ENCODE measurements at regions of chr11 and their contacts with region 1.

Region 1: GRCh38 chr11:3091791-3092602 is 34.8 kb upstream of the CARS1 start:
- DNase-seq: peak; percentile 82
- H3K4me3 Mint-ChIP-seq: no peak overlapping the region
- H3K27ac Mint-ChIP-seq: no peak overlapping the region
- H3K4me1 Mint-ChIP-seq: peaks cover 3% of the 10 kb centered on the region
- H3K27me3 Mint-ChIP-seq: peaks cover 14% of the 10 kb centered on the region

Region 2: DNA sequence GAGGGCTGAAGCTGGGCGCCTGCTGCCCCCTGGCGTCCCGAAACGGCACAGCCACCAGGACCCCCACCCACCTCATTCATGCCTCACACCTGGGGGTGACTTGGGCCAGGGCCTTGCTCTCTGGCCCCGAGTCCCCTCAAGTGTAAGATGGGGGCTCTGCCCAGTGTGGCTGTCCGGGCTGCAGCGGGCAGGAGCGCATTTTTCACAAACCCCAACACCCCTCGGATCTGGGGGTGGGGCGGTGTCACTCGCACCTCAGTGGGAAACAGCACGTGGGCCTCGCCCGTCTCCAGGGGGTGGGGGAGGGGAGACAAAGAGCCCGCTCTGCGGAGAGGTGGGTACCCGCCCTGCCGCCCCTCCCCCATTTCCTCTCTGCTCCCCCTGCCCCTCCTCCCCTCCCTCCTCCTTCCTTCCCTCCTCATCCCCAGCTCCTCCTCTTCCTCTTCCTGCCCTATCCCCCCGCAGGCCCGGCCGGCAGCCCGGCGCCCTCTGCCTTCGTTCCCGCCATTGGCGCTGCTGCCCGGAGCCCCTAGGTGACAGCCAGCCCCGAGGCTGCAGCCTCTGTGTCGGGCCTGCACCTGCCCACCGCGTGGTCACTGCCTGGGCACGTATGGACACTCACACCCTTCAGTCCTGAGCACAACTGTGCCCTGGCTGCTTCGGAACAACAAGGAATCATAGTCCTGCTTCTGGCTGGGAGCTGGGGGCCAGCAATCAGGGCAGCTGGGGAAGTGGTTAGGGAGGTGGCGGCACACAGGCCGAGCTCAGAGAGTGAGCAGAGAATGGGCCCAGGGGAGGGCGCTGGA is 199.6 kb before region 1 on chr11:
- CTCF ChIA-PET with region 1: interaction called, 11 read pairs
- DNase-seq: peak; percentile 90
- H3K4me3 Mint-ChIP-seq: peak overlapping the region; percentile 81
- H3K27ac Mint-ChIP-seq: peak overlapping the region; percentile 86
- H3K4me1 Mint-ChIP-seq: peaks cover 35% of the 10 kb centered on the region
- H3K27me3 Mint-ChIP-seq: peaks cover 19% of the 10 kb centered on the region

Region 3: DNA sequence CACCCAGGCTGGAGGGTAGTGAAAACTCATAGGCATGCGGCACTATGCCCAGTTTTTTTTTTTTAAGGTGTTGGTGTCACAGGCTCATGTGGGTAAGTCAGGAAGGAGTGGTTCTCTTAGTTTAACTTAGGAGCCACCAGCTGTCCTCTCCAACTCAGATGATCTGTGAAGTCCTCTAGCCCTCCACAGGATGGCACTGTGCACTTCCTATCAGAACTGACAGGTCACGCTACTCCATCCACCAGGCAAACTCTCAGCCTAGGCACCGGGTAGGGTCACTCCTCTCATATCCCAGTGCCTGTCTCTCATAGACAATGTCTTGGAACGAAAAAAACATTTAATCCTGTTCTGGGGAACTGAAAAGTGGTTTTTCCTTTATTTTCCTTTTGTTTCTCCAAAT is 116.4 kb before region 1 on chr11:
- CTCF ChIA-PET with region 1: interaction called, 28 read pairs
- DNase-seq: peak; percentile 65
- H3K4me3 Mint-ChIP-seq: no peak overlapping the region
- H3K27ac Mint-ChIP-seq: peak overlapping the region; percentile 37
- H3K4me1 Mint-ChIP-seq: peaks cover 27% of the 10 kb centered on the region
- H3K27me3 Mint-ChIP-seq: no peaks in the 10 kb centered on the region

Region 4: GRCh38 chr11:3021125-3021524 is 70.9 kb before region 1 on chr11:
- CTCF ChIA-PET with region 1: interaction called, 20 read pairs
- DNase-seq: peak; percentile 64
- H3K4me3 Mint-ChIP-seq: no peak overlapping the region
- H3K27ac Mint-ChIP-seq: no peak overlapping the region
- H3K4me1 Mint-ChIP-seq: peaks cover 68% of the 10 kb centered on the region
- H3K27me3 Mint-ChIP-seq: no peaks in the 10 kb centered on the region

Region 5: GRCh38 chr11:3069425-3069824 is 22.6 kb before region 1 on chr11:
- CTCF ChIA-PET with region 1: interaction called, 12 read pairs
- DNase-seq: no peak
- H3K4me3 Mint-ChIP-seq: no peak overlapping the region
- H3K27ac Mint-ChIP-seq: no peak overlapping the region
- H3K4me1 Mint-ChIP-seq: no peaks in the 10 kb centered on the region
- H3K27me3 Mint-ChIP-seq: peaks cover 65% of the 10 kb centered on the region

Measured in activated naive CD4-positive, alpha-beta T cell treated with anti-CD3 and anti-CD28 coated beads, Interleukin-2, amount 10 ng/mL, durations not matched to agents 7 days and 5 days (primary cell).